ENCODE measurements at regions of chr20 and their contacts with region 1.

Region 1: GRCh38 chr20:57498425-57499400 is 26.2 kb downstream of the CTCFL start:
- ATAC-seq: peak in 7 of 8 experiments; percentile 34 to 82 (median 63)
- H3K4me3 ChIP-seq: no peak overlapping the region
- H3K27ac ChIP-seq: no peak overlapping the region
- H3K4me1 ChIP-seq: peaks cover 0 to 5% of the 10 kb centered on the region in 2 donors

Region 2: GRCh38 chr20:56859801-56860261 is 638.9 kb before region 1 on chr20:
- in situ Hi-C with region 1: no loop called
- ATAC-seq: peak in 7 of 8 experiments; percentile 12 to 75 (median 72)
- H3K4me3 ChIP-seq: no peak overlapping the region
- H3K27ac ChIP-seq: peak overlapping the region in 1 of 2 donors; percentile 21
- H3K4me1 ChIP-seq: peaks cover 5 to 19% of the 10 kb centered on the region in 2 donors

Region 3: GRCh38 chr20:57374931-57375651 is 123.6 kb before region 1 on chr20:
- in situ Hi-C with region 1: loop called (anchors 5 to 25 kb)
- ATAC-seq: no peak
- H3K4me3 ChIP-seq: no peak overlapping the region
- H3K27ac ChIP-seq: no peak overlapping the region
- H3K4me1 ChIP-seq: no peaks in the 10 kb centered on the region

Region 4: GRCh38 chr20:57391074-57391554 is 107.6 kb before region 1 on chr20 and contains the start of gene RBM38:
- in situ Hi-C with region 1: loop called in 8 of 9 experiments (anchors 10 to 25 kb)
- ATAC-seq: peak; percentile 65 to 84 (median 71)
- H3K4me3 ChIP-seq: peak within 1 kb of the TSS; percentile 57 to 85 (median 75)
- H3K27ac ChIP-seq: peak within 1 kb of the TSS in 1 of 2 donors; percentile 47
- H3K4me1 ChIP-seq: peaks cover 43 to 53% of the 10 kb centered on the region in 2 donors
- total RNA-seq, gene RBM38: 1.2 to 24.3 (median 9.6) TPM